Common myeloid progenitor, CD34-positive (primary cell): ENCODE measurements at regions of chr10 and their contacts with region 1.

Region 1: DNA sequence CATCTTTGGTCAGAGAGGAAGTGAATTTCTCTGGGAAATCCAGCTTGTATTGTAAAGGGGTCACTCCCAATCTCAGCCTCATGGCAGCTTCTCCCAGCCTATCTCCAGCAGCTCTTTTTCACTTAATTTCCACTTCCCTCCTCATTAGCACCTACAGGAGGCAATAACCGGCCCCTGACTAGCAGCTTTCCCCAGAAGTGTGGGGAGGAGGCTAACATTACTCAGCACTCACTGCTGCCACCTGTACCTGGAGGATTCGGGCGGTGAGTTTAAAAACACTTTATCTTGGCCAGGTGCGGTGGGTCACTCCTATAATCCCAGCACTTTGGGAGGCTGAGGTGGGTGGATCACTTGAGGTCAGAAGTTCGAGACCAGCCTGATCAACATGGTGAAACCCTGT is 3.8 kb downstream of the NODAL start:
- DNase-seq: no peak
- H3K4me3 ChIP-seq: no peak overlapping the region
- H3K27ac ChIP-seq: no peak overlapping the region
- H3K4me1 ChIP-seq: peaks cover 0 to 21% (median 15%) of the 10 kb centered on the region in 4 experiments
- H3K27me3 ChIP-seq: peaks cover 0 to 52% (median 37%) of the 10 kb centered on the region in 5 experiments

Region 2: DNA sequence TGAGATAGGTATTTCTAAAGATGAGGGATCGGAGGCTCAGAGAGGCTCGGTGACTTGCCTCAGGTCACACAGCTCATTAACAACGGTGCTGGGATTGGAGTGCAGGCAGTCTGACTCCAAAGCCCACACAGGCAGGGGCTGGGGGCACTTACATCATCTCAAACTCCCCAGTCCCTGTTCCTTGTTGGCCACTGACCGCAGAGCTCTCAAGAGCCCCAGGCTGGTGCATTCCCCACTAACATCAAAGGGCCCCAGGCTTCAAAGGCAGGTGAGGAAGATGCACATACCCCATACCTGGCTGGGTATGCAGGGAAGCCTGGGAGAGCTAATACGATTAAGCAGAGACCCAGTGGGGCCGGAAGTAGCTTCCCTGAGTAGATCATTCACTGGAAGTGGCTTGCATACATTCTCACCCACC is 17.5 kb after region 1 on chr10:
- CTCF ChIA-PET with region 1: interaction called, 10 read pairs
- POLR2A ChIA-PET with region 1: no interaction called
- DNase-seq: no peak
- H3K4me3 ChIP-seq: no peak overlapping the region
- H3K27ac ChIP-seq: no peak overlapping the region
- H3K4me1 ChIP-seq: peaks cover 0 to 11% (median 10%) of the 10 kb centered on the region in 4 experiments
- H3K27me3 ChIP-seq: peaks cover 2 to 52% (median 25%) of the 10 kb centered on the region in 5 experiments